ENCODE measurements at regions of chr6 and their contacts with region 1.

Region 1: DNA sequence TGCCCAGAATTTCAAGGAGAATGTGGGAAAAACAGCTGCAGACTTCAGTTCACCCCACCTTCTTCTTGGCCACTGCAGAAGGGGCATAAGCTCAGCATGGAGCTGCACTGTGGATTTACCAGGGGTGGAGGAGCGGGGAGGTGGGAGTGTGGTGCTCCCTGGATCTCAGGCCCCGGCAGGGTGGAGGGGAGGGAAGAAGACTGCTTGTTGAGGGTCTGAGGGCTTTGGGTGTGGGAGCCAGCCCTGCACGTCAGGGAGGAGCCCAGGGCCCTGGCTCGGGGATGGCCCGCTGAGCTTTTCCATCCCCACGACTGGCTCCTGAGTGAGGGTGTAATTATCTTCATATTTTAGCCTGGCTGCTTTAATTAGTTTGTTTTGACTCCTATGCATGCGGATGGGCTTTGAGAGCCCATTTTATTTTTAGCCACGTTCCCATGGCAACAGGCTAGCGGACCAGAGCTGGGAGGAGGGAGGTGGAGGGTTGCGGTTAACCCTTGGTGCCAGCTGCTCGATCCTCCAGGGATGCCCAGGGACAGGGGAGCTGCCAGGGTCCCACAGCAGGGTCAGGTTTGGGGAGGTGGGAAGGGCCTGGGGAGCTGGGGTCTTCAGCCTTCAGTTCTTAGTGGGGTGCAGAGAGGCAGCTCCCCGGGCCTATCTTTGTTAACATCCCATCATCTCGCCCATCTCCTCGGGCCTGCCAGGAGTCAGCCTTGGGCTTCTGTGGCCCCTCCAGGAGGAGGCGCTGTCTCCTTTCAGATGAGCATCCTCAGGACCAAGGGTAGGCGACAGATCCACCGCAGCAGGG is 68.2 kb downstream of the RAB44 start:
- DNase-seq: peak; percentile 68 to 93 (median 86)

Region 2: GRCh38 chr6:36851149-36851614 is 85.4 kb after region 1 on chr6:
- intact Hi-C with region 1: loop called (anchors 5 kb)
- DNase-seq: peak in 31 of 42 donors; percentile 36 to 87 (median 66)

Region 3: GRCh38 chr6:38283734-38284362 is 1518.1 kb after region 1 on chr6:
- intact Hi-C with region 1: no loop called
- DNase-seq: no peak